IMR-90 (cell line): ENCODE measurements at regions of chr16 and their contacts with region 1.

Region 1: DNA sequence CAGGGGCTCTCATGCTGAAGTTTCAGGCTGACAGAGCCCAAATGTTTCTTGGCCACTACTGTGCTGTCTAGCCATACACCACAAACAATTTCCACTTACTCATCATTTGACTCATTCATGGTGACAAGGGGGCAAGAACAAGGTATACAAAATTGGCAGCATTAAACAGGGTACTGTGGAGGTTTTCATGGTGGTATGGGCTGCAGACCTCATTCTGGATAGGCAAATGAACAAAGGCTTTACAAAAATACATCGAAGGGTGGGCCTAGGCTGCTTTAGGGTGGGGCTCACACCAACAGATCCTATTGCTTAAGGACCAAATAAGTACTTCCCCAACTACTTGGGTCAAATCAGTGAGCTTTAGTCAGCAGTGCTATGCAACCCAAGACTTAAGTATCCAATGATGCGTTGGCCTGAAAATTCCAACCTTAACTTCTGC is 53.0 kb downstream of the N4BP1 start:
- DNase-seq: peak; percentile 89
- ATAC-seq: peak; percentile 73
- H3K4me3 ChIP-seq: no peak overlapping the region
- H3K27ac ChIP-seq: no peak overlapping the region
- H3K4me1 ChIP-seq: peaks cover 23% of the 10 kb centered on the region
- H3K27me3 ChIP-seq: no peaks in the 10 kb centered on the region
- CTCF ChIP-seq: no peak
- POLR2A ChIP-seq: no peak
- RAD21 ChIP-seq: no peak

Region 2: GRCh38 chr16:48378836-48379235 is 178.1 kb before region 1 on chr16:
- CTCF ChIA-PET with region 1: no interaction called
- POLR2A ChIA-PET with region 1: no interaction called
- dilution Hi-C with region 1: no loop called
- in situ Hi-C with region 1: no loop called
- intact Hi-C with region 1: loop called (anchors 5 kb)
- DNase-seq: no peak
- ATAC-seq: no peak
- H3K4me3 ChIP-seq: no peak overlapping the region
- H3K27ac ChIP-seq: peak overlapping the region; percentile 44; the same call in 1 of the 2 replicates
- H3K4me1 ChIP-seq: peaks cover 13% of the 10 kb centered on the region
- H3K27me3 ChIP-seq: no peaks in the 10 kb centered on the region
- CTCF ChIP-seq: no peak
- POLR2A ChIP-seq: no peak
- RAD21 ChIP-seq: no peak

Region 3: GRCh38 chr16:48609652-48610029 is 52.7 kb after region 1 on chr16:
- CTCF ChIA-PET with region 1: no interaction called
- POLR2A ChIA-PET with region 1: no interaction called
- dilution Hi-C with region 1: no loop called
- in situ Hi-C with region 1: loop called (anchors 5 kb)
- intact Hi-C with region 1: loop called (anchors 10 kb)
- DNase-seq: peak; percentile 54
- ATAC-seq: peak; percentile 80
- H3K4me3 ChIP-seq: peak overlapping the region; percentile 98
- H3K27ac ChIP-seq: peak overlapping the region; percentile 77
- H3K4me1 ChIP-seq: peaks cover 22% of the 10 kb centered on the region
- H3K27me3 ChIP-seq: no peaks in the 10 kb centered on the region
- CTCF ChIP-seq: no peak
- POLR2A ChIP-seq: no peak
- RAD21 ChIP-seq: no peak

Region 4: GRCh38 chr16:48960830-48961229 is 403.9 kb after region 1 on chr16:
- CTCF ChIA-PET with region 1: interaction called, 10 read pairs
- POLR2A ChIA-PET with region 1: no interaction called
- dilution Hi-C with region 1: no loop called
- in situ Hi-C with region 1: no loop called
- intact Hi-C with region 1: no loop called
- DNase-seq: no peak
- ATAC-seq: no peak
- H3K4me3 ChIP-seq: no peak overlapping the region
- H3K27ac ChIP-seq: no peak overlapping the region
- H3K4me1 ChIP-seq: peaks cover 33% of the 10 kb centered on the region
- H3K27me3 ChIP-seq: no peaks in the 10 kb centered on the region
- CTCF ChIP-seq: no peak
- POLR2A ChIP-seq: no peak
- RAD21 ChIP-seq: no peak